ENCODE measurements at regions of chr19 and their contacts with region 1.

Region 1: DNA sequence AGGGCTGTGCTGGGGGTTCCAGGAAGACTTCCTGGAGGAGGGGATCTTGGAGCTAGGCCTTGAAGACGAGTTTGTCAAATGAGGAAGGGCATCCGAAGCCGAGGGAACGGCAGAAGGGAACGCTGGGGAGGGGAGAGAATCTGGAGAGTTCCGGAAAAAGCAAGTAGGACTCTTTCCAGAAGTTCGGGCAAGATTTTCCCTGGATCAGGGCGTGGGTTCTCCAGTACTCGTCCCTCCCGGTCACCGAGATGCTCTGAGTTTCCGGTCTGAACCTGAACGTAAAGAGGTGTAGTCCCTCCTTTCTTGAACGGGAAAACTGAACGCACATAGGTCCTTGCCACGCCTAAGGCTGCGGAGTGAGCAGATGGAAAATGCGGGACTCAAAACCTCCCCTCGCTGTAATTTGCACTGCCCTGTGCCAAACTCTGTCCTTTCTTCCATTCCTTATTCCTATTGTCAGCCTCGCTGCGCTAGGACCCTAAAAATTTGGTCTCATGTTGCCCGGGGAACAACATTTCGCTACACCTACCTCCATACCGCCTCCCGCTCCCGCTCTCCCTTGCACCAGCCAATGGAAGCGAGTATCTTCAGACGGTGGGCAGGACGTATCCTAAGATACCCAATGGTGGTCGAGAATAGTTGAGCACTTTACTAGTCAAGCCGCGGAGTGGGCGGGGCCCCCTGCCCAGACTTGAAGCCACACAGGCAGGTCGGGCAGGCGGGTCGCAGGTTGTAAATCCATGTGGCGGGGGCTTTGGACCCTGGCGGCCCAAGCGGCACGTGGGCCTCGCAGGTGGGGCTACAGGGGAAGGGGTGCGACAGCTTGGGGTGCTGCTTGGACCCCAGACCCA is at the start of gene GTPBP3:
- DNase-seq: peak; percentile 95
- H3K4me3 Mint-ChIP-seq: peak within 1 kb of the TSS; percentile 87
- H3K27ac Mint-ChIP-seq: peak within 1 kb of the TSS; percentile 88
- H3K4me1 Mint-ChIP-seq: peaks cover 21% of the 10 kb centered on the region
- H3K27me3 Mint-ChIP-seq: peaks cover 2% of the 10 kb centered on the region
- total RNA-seq, gene GTPBP3: 64.2 and 72.0 TPM in 2 replicates

Region 2: GRCh38 chr19:17419621-17420466 is 82.7 kb after region 1 on chr19 and contains the start of gene MVB12A:
- intact Hi-C with region 1: loop called (anchors 1 kb)
- DNase-seq: peak; percentile 95
- H3K4me3 Mint-ChIP-seq: peak within 1 kb of the TSS; percentile 94
- H3K27ac Mint-ChIP-seq: peak within 1 kb of the TSS; percentile 94
- H3K4me1 Mint-ChIP-seq: peaks cover 17% of the 10 kb centered on the region
- H3K27me3 Mint-ChIP-seq: no peaks in the 10 kb centered on the region
- total RNA-seq, gene MVB12A: 40.8 and 42.7 TPM in 2 replicates